Panc1 (cell line): ENCODE measurements at regions of chrX and their contacts with region 1.

Region 1: DNA sequence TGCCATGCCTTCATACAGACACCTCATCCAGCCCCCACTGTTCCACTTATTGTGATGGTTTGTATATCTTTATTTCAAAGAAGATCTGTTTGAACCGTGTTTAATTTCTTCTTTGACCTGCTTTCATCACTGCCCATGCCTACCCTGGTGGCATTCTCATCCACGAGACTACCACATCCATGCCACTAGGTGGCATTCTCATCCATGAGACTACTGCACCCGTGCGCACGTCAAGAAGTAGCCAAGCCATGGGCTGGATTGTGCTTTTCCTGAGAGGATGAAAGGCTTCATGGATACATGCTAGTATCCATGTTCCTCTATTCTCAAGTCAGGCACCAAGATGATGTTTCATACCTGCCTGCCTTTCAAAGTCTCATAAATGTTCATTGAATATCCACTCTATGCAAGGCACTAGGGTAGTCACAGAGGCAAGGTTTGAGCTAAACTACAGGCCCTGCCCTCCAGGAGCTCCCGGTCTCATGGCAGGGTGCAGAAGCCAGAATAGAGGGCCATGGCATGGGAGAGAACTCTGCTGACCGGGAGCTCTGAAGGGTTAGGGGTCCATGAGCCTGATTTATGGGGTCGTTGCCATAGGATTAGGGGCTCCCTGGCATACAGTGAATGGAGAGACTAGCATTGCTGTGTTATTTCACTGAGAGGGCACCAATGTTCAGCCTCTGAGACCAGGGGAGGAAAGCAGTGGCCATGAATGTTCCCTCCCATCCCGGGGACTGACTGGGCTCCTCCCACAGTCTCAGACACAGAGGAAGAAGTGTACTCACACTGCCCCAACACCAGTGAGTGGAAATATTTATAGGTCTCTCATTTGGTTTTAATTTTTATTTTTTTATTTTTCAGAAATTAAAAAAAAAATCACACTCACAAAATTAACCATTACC is 24.8 kb upstream of the EOLA2 start:
- DNase-seq: peak; percentile 58
- ATAC-seq: peak; percentile 100
- H3K4me3 ChIP-seq: no peak overlapping the region
- H3K27ac ChIP-seq: peak overlapping the region; percentile 66; the same call in 1 of the 2 replicates
- H3K4me1 ChIP-seq: no peaks in the 10 kb centered on the region
- H3K27me3 ChIP-seq: no peaks in the 10 kb centered on the region
- CTCF ChIP-seq: peak; percentile 81

Region 2: GRCh38 chrX:150486011-150486410 is 522.9 kb after region 1 on chrX:
- CTCF ChIA-PET with region 1: no interaction called
- POLR2A ChIA-PET with region 1: no interaction called
- in situ Hi-C with region 1: no loop called
- intact Hi-C with region 1: loop called (anchors 2 kb)
- DNase-seq: peak; percentile 18
- ATAC-seq: peak; percentile 85
- H3K4me3 ChIP-seq: no peak overlapping the region
- H3K27ac ChIP-seq: no peak overlapping the region
- H3K4me1 ChIP-seq: no peaks in the 10 kb centered on the region
- H3K27me3 ChIP-seq: no peaks in the 10 kb centered on the region
- CTCF ChIP-seq: peak; percentile 82